PC-3 (cell line): ENCODE measurements at regions of chr3 and their contacts with region 1.

Region 1: GRCh38 chr3:161274719-161275298 is 53.7 kb downstream of the NMD3 start:
- DNase-seq: peak; percentile 85
- ATAC-seq: peak; percentile 44
- H3K4me3 ChIP-seq: no peak overlapping the region
- H3K27ac ChIP-seq: peak overlapping the region; percentile 50
- H3K4me1 ChIP-seq: peaks cover 20% of the 10 kb centered on the region
- H3K27me3 ChIP-seq: no peaks in the 10 kb centered on the region
- CTCF ChIP-seq: peak; percentile 93

Region 2: DNA sequence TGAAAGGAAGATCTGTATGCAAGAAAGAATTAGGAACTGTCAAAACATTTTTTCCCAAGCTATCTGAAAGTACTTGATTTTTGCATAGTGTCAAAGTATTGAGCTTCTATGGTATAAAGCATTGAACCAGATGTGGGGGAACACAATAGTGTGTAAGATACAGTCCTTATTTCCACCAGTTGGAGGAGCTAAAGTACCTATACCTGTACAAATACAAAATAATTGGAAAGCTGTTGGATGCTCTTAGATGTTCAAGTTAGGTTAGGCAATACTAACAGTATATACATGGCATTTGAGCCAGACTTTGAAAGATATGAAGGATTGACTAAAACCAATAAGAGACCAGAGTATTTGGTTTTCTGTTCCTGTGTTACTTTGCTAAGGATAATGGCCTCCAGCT is 318.0 kb before region 1 on chr3:
- CTCF ChIA-PET with region 1: no interaction called
- POLR2A ChIA-PET with region 1: no interaction called
- intact Hi-C with region 1: loop called (anchors 5 kb)
- DNase-seq: peak; percentile 74
- ATAC-seq: peak; percentile 92
- H3K4me3 ChIP-seq: no peak overlapping the region
- H3K27ac ChIP-seq: no peak overlapping the region
- H3K4me1 ChIP-seq: no peaks in the 10 kb centered on the region
- H3K27me3 ChIP-seq: no peaks in the 10 kb centered on the region
- CTCF ChIP-seq: peak; percentile 86

Region 3: DNA sequence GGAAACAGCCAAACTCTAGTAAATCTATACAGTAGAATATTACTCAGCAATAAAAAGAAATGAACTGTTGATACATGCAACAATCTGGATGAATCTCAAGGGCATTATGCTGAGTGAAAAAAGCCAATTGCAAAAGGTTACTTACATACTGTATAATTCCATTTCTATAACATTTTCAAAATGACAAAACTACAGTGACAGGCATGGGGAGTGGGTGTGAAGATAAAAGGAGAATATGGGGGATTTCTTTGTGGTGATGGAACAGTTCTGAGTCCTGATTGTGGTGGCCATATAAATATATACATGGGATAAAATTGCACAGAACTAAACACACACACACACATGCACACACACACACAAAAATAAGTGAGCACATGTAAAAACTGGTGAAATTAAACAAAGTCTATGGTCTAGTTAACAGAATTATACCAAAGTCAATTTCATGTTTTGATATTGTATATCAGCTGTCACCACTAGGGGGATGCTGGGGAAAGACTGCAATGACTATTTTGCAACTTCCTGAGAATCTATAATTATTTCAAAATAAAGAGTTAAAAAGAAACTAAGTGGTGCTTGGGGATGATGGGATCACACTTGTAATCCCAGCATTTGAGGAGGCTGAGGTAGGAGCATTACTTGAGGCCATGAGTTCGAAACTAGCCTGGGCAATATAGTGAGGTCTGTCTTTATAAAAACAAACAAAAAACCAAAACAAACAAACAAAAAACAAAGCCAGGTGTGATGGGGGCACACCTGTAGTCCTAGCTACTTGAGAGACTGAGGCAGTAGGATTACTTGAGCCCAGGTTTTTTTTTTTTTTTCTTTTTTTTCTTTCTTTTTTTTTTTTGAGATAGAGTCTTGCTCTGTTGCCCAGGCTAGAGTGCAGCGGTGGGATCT is 30.5 kb after region 1 on chr3:
- CTCF ChIA-PET with region 1: interaction called, 12 read pairs
- POLR2A ChIA-PET with region 1: no interaction called
- intact Hi-C with region 1: no loop called
- DNase-seq: peak; percentile 64
- ATAC-seq: peak; percentile 46; the same call in 1 of the 2 replicates
- H3K4me3 ChIP-seq: no peak overlapping the region
- H3K27ac ChIP-seq: no peak overlapping the region
- H3K4me1 ChIP-seq: no peaks in the 10 kb centered on the region
- H3K27me3 ChIP-seq: no peaks in the 10 kb centered on the region
- CTCF ChIP-seq: peak; percentile 89

Region 4: GRCh38 chr3:161349529-161350278 is 74.9 kb after region 1 on chr3:
- CTCF ChIA-PET with region 1: no interaction called
- POLR2A ChIA-PET with region 1: no interaction called
- intact Hi-C with region 1: loop called (anchors 5 kb)
- DNase-seq: peak; percentile 93
- ATAC-seq: peak; percentile 78
- H3K4me3 ChIP-seq: no peak overlapping the region
- H3K27ac ChIP-seq: peak overlapping the region; percentile 73
- H3K4me1 ChIP-seq: peaks cover 46% of the 10 kb centered on the region
- H3K27me3 ChIP-seq: no peaks in the 10 kb centered on the region
- CTCF ChIP-seq: no peak